Panc1 (cell line): ENCODE measurements at regions of chr10 and their contacts with region 1.

Region 1: DNA sequence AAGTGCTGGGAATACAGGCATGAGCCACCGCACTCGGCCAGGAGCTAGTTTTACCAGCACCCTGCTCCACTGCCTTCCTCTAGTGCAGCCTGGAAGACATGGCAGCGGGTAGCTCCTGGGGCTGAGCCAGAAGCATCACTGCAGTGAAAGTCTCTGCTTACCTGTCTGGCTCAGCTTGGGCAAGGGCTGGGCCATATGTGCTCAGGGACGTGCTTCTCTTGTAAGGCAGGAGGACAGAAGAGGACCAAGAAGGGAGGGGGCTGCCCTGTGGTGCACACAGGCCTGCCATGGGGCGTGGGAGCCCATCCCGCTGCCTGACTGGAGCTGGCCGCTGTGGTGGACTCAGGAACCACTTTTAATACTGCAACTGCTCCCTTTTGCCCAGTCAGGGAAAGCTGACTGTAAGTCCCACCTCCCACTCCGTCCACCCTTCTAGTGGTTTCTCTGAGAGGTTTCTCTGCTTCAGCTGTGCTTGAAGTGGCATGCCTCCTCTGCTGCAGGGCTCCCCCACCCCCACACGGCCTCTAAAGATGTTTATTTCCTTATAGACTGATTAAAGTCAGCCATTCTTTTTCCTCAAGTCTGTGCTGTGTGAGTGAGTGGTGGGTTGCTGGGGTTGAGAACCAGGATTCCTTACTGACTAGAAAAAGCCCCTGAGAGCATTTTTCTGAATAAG is 25.3 kb upstream of the C10orf95 start:
- DNase-seq: no peak
- ATAC-seq: 0 out of 2 replicates have a peak, but pooled peaks have one; percentile 3
- H3K4me3 ChIP-seq: no peak overlapping the region
- H3K27ac ChIP-seq: no peak overlapping the region
- H3K4me1 ChIP-seq: no peaks in the 10 kb centered on the region
- H3K27me3 ChIP-seq: no peaks in the 10 kb centered on the region
- CTCF ChIP-seq: no peak

Region 2: GRCh38 chr10:102358712-102359382 is 117.8 kb before region 1 on chr10:
- CTCF ChIA-PET with region 1: interaction called, 10 read pairs
- POLR2A ChIA-PET with region 1: no interaction called
- in situ Hi-C with region 1: no loop called
- intact Hi-C with region 1: no loop called
- DNase-seq: no peak
- ATAC-seq: no peak
- H3K4me3 ChIP-seq: no peak overlapping the region
- H3K27ac ChIP-seq: no peak overlapping the region
- H3K4me1 ChIP-seq: no peaks in the 10 kb centered on the region
- H3K27me3 ChIP-seq: no peaks in the 10 kb centered on the region
- CTCF ChIP-seq: no peak

Region 3: DNA sequence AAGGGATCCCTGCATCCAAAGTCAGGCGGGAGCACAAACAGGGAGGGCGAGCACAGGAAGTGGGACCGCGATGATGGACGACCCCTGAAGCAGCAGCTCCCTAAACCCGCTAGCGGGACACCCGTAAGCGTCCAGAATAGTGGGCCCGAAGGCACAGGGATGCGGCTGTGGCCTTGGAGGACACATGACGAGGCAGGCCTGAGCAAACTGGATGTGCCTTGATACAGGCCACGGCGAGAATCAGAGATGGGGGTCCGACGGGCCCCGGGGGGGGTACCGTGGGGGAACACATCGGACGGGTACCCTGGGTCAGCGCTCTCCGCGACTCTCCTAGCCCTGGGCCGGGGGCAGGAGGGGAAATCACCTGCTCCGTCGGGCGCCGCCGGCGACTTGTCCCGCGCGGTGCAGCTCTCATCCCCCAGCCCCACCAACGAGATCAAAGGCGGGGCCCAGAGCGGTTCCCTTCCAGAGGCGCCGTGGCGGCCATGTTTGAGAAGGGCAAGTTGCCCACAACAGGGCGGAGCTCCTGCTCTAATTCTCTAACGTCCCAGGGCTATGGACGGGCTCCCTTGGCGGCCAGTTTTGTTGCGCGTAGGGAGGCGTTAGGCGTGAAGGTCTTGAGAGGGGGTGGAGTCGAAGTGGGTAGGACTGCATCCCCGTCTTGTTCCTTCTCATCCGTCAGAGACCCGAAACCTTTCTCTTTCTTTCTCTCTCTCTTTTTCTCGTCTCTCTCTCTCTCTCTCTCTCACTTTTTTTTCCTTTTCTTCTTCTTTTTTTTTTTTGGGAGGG is 44.2 kb before region 1 on chr10 and contains the start of gene CUEDC2:
- CTCF ChIA-PET with region 1: interaction called, 7 read pairs
- POLR2A ChIA-PET with region 1: no interaction called
- in situ Hi-C with region 1: no loop called
- intact Hi-C with region 1: loop called (anchors 5 kb)
- DNase-seq: peak; percentile 80
- ATAC-seq: peak; percentile 96
- H3K4me3 ChIP-seq: peak within 1 kb of the TSS; percentile 88 to 98
- H3K27ac ChIP-seq: peak within 1 kb of the TSS; percentile 97
- H3K4me1 ChIP-seq: peaks cover 14% of the 10 kb centered on the region
- H3K27me3 ChIP-seq: no peaks in the 10 kb centered on the region
- CTCF ChIP-seq: no peak
- total RNA-seq, gene CUEDC2: 79.3 TPM